ENCODE measurements at regions of chr4 and their contacts with region 1.

Region 1: GRCh38 chr4:2418650-2419571 is at the start of gene CFAP99:
- DNase-seq: peak; percentile 99
- H3K4me3 Mint-ChIP-seq: peak within 1 kb of the TSS; percentile 89
- H3K27ac Mint-ChIP-seq: peak within 1 kb of the TSS; percentile 74
- H3K4me1 Mint-ChIP-seq: peaks cover 33% of the 10 kb centered on the region
- H3K27me3 Mint-ChIP-seq: peaks cover 13% of the 10 kb centered on the region
- total RNA-seq, gene CFAP99: not detected

Region 2: GRCh38 chr4:1628892-1629698 is 789.8 kb before region 1 on chr4:
- CTCF ChIA-PET with region 1: no interaction called
- POLR2A ChIA-PET with region 1: no interaction called
- intact Hi-C with region 1: no loop called
- DNase-seq: peak; percentile 74
- H3K4me3 Mint-ChIP-seq: no peak overlapping the region
- H3K27ac Mint-ChIP-seq: no peak overlapping the region
- H3K4me1 Mint-ChIP-seq: no peaks in the 10 kb centered on the region
- H3K27me3 Mint-ChIP-seq: no peaks in the 10 kb centered on the region

Region 3: GRCh38 chr4:1721004-1721665 is 697.8 kb before region 1 on chr4 and contains the starts of genes TACC3 and TMEM129:
- CTCF ChIA-PET with region 1: no interaction called
- POLR2A ChIA-PET with region 1: no interaction called
- intact Hi-C with region 1: loop called (anchors 5 kb)
- DNase-seq: peak; percentile 97
- H3K4me3 Mint-ChIP-seq: peak within 1 kb of the TSS; percentile 89
- H3K27ac Mint-ChIP-seq: peak within 1 kb of the TSS; percentile 99
- H3K4me1 Mint-ChIP-seq: peaks cover 52% of the 10 kb centered on the region
- H3K27me3 Mint-ChIP-seq: no peaks in the 10 kb centered on the region
- total RNA-seq, gene TACC3: 194 to 201 TPM
- total RNA-seq, gene TMEM129: 16.2 to 18.1 TPM

Region 4: DNA sequence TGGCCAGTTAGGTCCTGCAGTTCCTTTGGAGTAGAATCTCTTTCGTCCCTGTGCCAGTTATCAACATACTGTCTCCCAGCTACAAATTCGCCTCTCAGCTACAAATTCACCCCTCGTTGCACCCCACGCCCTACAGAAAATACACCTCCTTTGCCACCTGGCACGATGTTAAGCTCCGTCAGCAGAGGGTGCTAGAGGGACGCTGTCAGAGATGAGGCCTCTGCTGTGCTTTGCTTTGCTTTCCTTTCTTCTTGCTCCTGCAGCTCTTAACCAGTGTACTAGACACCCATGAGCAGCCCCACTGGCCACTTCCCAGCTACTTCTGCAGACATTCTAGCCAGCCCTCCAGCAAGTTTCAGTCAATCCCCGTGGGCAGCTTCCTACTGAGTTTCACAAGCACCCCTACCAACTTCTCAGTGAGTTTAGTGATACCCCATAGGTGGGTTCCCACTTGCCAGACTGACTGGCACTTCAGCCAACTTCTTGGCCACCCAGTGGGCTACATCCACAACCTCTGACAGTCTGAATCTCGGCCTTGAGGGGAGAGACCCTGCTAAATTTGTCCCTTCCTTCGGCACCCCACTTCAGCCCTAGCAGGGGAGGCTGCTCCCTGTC is 198.8 kb before region 1 on chr4:
- CTCF ChIA-PET with region 1: interaction called, 11 read pairs
- POLR2A ChIA-PET with region 1: no interaction called
- intact Hi-C with region 1: no loop called
- DNase-seq: peak; percentile 84
- H3K4me3 Mint-ChIP-seq: no peak overlapping the region
- H3K27ac Mint-ChIP-seq: no peak overlapping the region
- H3K4me1 Mint-ChIP-seq: peaks cover 5% of the 10 kb centered on the region
- H3K27me3 Mint-ChIP-seq: no peaks in the 10 kb centered on the region

Region 5: GRCh38 chr4:2441393-2442174 is 22.7 kb after region 1 on chr4:
- CTCF ChIA-PET with region 1: interaction called, 8 read pairs
- POLR2A ChIA-PET with region 1: no interaction called
- intact Hi-C with region 1: loop called (anchors 2 kb)
- DNase-seq: peak; percentile 90
- H3K4me3 Mint-ChIP-seq: no peak overlapping the region
- H3K27ac Mint-ChIP-seq: no peak overlapping the region
- H3K4me1 Mint-ChIP-seq: peaks cover 4% of the 10 kb centered on the region
- H3K27me3 Mint-ChIP-seq: no peaks in the 10 kb centered on the region

Region 6: GRCh38 chr4:2536193-2537010 is 117.5 kb after region 1 on chr4 and contains the start of gene FAM193A:
- CTCF ChIA-PET with region 1: no interaction called
- POLR2A ChIA-PET with region 1: no interaction called
- intact Hi-C with region 1: loop called (anchors 1 kb)
- DNase-seq: peak; percentile 100
- H3K4me3 Mint-ChIP-seq: peak within 1 kb of the TSS; percentile 87
- H3K27ac Mint-ChIP-seq: peak within 1 kb of the TSS; percentile 86
- H3K4me1 Mint-ChIP-seq: peaks cover 20% of the 10 kb centered on the region
- H3K27me3 Mint-ChIP-seq: no peaks in the 10 kb centered on the region
- total RNA-seq, gene FAM193A: 21.7 to 22.6 TPM

Measured in activated CD4-positive, alpha-beta memory T cell treated with anti-CD3 and anti-CD28 coated beads for 36 hours (primary cell).